Activated T-helper 1 cell treated with anti-CD3 and anti-CD28 coated beads, Interleukin-12 subunit alpha, Interleukin-12 subunit beta, Interleukin-2, Interleukin-4 antibody, amounts not matched to agents 30 ng/mL and 10 ng/mL and 1 ng/mL, durations not matched to agents 14 hours and 24 hours and 36 hours (primary cell): ENCODE measurements at regions of chr12 and their contacts with region 1.

Region 1: GRCh38 chr12:3951380-3952135 is 78.4 kb upstream of the PARP11 start:
- DNase-seq: no peak
- H3K4me3 Mint-ChIP-seq: no peak overlapping the region
- H3K27ac Mint-ChIP-seq: no peak overlapping the region
- H3K4me1 Mint-ChIP-seq: peaks cover 48% of the 10 kb centered on the region
- H3K27me3 Mint-ChIP-seq: no peaks in the 10 kb centered on the region

Region 2: GRCh38 chr12:3988519-3989448 is 37.2 kb after region 1 on chr12:
- intact Hi-C with region 1: loop called (anchors 5 kb)
- DNase-seq: no peak
- H3K4me3 Mint-ChIP-seq: peak overlapping the region; percentile 21
- H3K27ac Mint-ChIP-seq: peak overlapping the region; percentile 1
- H3K4me1 Mint-ChIP-seq: peaks cover 25% of the 10 kb centered on the region
- H3K27me3 Mint-ChIP-seq: peaks cover 13% of the 10 kb centered on the region

Region 3: DNA sequence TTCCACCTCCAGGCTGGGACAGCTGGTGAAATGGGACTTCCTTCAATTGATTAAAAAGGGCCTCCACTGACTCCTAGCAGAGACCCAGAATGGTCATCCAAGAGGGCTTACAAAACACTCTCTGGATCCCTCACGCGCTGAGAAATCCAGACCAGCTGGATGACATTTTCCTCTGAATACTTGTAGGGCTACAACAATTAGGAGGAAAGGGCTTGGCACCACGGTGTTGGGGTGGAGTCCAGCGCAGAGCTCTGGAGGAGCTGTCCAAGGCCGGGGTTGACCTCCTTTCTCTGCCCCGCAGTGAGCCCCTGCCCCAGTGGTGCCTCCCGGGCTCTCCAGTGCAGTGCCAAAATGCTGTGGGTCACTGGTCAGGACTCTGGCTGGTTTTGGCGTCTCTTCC is 133.0 kb after region 1 on chr12:
- intact Hi-C with region 1: no loop called
- DNase-seq: no peak
- H3K4me3 Mint-ChIP-seq: no peak overlapping the region
- H3K27ac Mint-ChIP-seq: no peak overlapping the region
- H3K4me1 Mint-ChIP-seq: peaks cover 7% of the 10 kb centered on the region
- H3K27me3 Mint-ChIP-seq: peaks cover 4% of the 10 kb centered on the region